ENCODE measurements at regions of chr17 and their contacts with region 1.

Region 1: DNA sequence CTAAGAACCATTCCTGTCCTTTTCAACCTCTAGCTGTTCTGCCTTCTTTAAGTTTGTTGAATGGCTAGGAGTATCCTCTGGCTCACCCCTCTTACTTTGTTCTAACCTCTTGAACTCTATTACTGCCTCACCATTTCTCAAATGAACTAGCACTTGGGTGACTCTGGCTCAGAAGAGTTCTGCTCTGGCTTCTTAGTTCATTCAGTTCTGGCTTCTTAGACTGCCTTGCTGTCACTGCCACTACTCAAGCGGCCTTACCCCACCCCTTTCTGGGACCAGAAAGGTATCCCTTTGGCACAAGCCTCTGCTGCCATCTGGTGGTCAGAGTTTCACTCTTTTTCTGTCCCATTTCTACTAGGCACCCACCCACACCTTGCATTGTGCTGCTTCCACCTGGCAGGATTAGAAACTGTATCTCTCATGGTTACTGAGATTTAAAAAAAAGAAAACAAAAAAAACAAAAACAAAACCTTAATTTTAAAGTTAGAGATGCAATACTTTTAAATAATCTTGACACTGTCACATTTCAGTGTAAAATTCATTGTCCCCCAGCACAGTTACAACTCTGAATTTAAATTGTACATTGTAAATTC is 6.8 kb upstream of the ABCA10 start:
- DNase-seq: peak; percentile 88
- H3K4me3 ChIP-seq: no peak overlapping the region
- H3K27ac ChIP-seq: no peak overlapping the region
- H3K4me1 ChIP-seq: peaks cover 0 to 4% (median 0%) of the 10 kb centered on the region in 4 donors
- H3K27me3 ChIP-seq: no peaks in the 10 kb centered on the region
- CTCF ChIP-seq: peak; percentile 40 to 56 (median 51)
- EP300 ChIP-seq: no peak
- POLR2A ChIP-seq: no peak

Region 2: DNA sequence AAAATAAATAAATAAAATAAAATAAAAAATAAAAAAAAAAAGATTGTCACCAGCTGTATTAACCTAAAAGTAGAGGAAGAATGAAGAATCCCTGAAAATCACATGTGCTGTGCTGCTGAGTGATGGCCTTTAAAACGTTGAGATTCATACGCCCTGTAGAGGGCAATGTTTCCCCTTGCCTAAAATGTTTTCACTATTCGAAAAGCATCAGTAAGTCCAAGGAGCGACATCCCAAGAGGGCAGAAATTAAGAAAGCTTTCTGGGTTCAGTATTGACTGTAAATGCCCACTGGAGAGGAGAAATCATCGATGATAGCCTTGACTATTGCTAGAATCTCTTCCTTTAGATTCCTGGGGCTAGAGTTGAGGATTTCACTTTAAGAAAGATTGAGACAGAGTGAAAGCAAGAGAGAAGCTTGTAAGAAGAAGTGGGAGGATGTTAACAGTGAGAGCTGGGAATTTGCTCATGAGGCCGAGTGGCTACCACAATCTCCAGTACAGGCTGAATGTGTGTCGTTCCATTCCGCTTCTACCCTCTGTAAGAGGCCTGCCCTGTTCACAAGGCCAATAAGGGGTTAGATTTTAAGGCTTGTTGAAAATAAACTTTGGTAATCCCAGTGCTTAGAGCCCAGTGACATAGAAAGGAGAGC is 463.4 kb before region 1 on chr17:
- intact Hi-C with region 1: loop called (anchors 2 kb)
- DNase-seq: no peak
- H3K4me3 ChIP-seq: peak overlapping the region in 1 of 4 donors; percentile 15
- H3K27ac ChIP-seq: peak overlapping the region in 3 of 4 donors; percentile 3 to 47 (median 5)
- H3K4me1 ChIP-seq: peaks cover 0 to 9% (median 0%) of the 10 kb centered on the region in 4 donors
- H3K27me3 ChIP-seq: no peaks in the 10 kb centered on the region
- CTCF ChIP-seq: peak in 2 of 4 experiments; percentile 26 to 46
- EP300 ChIP-seq: no peak
- POLR2A ChIP-seq: no peak

Region 3: DNA sequence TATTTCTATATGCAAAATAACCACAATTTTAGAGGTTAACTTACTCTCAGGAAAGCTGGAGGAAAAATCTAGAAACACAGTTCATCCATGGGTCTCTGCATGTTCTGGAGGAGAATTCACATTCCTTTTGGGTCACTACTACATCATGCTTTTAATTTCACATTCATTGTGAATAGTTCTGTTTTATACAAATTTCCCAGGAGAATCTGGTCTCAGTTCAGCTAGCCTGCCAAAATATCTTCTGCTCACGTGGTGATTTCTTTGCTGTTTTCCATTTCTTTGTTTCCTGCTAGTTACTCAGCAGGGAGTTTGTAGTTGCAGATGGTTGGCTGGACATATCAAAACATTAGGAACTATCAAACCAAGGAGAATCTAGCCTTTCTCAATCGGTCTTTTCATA is 174.6 kb before region 1 on chr17 and contains the start of gene ABCA9:
- intact Hi-C with region 1: loop called (anchors 10 kb)
- DNase-seq: no peak
- H3K4me3 ChIP-seq: peak within 1 kb of the TSS; percentile 1 to 25 (median 20)
- H3K27ac ChIP-seq: peak within 1 kb of the TSS; percentile 43 to 56 (median 48)
- H3K4me1 ChIP-seq: peaks cover 0 to 5% (median 0%) of the 10 kb centered on the region in 4 donors
- H3K27me3 ChIP-seq: no peaks in the 10 kb centered on the region
- CTCF ChIP-seq: no peak
- EP300 ChIP-seq: no peak
- POLR2A ChIP-seq: no peak
- total RNA-seq, gene ABCA9: 11.1 to 74.5 (median 41.7) TPM

Region 4: DNA sequence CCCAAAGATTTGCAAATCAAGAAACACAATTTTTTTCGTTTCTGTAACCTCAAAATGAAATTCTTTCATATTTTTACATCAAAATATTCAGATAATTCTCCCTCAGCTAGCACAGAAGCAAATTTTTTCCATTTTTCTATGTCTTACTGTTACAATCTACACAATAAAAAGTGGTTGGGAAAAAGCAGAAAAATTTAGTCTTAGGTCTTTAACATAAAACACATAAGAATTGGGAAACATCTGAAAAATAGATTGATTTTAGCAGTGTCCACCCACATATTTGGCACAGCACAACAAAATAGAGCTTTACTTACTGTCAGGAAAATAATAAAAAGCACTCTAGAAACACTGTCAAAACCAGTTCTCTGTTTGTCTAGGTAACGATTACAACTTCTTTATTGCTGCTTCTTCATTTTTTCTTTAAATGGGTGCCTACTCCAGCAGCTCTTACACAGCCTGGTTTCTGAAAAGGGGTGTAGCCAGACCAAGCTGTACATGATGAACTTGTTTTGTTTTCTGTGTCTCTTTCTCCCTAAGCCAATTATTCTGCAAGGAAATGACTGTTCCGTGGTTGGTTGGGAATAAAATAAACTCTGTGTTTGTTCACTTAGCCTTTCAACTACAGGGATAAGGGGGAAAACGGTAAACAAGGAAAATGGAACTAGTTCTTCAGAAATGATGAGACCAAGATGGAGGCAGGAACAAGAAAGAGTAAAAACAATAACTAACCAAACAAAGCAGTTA is 93.8 kb before region 1 on chr17 and contains the start of gene ABCA6:
- intact Hi-C with region 1: no loop called
- DNase-seq: no peak
- H3K4me3 ChIP-seq: peak within 1 kb of the TSS; percentile 18 to 39 (median 25)
- H3K27ac ChIP-seq: peak within 1 kb of the TSS; percentile 35 to 73 (median 51)
- H3K4me1 ChIP-seq: no peaks in the 10 kb centered on the region
- H3K27me3 ChIP-seq: no peaks in the 10 kb centered on the region
- CTCF ChIP-seq: no peak
- EP300 ChIP-seq: no peak
- POLR2A ChIP-seq: no peak
- total RNA-seq, gene ABCA6: 31.0 to 111 (median 72.1) TPM

Measured in sigmoid colon (tissue), 7 donors.